ENCODE measurements at regions of chr10 and their contacts with region 1.

Region 1: GRCh38 chr10:32378363-32379317 is 31.7 kb upstream of the EPC1 start:
- DNase-seq: peak; percentile 96
- H3K4me3 Mint-ChIP-seq: no peak overlapping the region
- H3K27ac Mint-ChIP-seq: no peak overlapping the region
- H3K4me1 Mint-ChIP-seq: peaks cover 22% of the 10 kb centered on the region
- H3K27me3 Mint-ChIP-seq: no peaks in the 10 kb centered on the region

Region 2: DNA sequence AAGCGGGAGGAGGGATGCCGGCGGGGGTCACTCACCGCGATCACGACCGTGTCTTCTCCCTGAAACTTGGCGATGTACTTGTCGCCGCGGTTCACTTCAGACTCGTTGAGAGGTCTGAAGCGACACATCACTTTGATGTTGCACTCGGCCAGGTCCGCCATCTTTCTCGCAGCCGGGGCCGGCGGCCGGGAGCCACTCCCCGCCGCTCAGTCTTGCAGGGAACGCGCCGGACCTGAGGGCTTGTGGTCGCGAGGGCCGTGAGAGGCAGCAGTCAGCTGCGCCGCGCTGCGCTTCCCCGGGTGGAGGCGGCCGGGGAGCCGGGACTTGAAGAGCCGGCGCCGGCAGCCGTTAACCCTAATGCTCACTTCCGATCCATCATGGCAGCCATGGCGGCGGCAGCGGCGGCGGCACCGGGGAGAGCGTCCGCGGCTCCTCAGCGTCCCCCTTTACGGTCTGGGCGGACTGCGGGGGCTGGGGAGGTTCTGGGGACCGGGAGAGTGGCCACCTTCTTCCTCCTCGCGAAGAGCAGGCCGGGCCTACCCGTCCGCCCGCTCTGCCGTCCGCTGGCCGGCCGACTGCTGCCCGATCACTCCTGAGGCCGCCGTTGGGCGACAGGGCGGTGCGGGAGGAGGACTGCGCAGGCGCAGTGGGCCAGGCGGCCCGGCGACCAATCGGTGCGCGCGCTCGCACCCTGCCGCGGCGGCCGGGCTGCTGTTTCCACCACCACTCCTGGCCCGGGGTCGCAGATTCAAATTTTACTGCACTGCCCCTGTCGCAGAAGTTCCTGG is 322.6 kb before region 1 on chr10 and contains the start of gene KIF5B:
- CTCF ChIA-PET with region 1: no interaction called
- POLR2A ChIA-PET with region 1: no interaction called
- intact Hi-C with region 1: loop called (anchors 2 kb)
- DNase-seq: peak; percentile 90
- H3K4me3 Mint-ChIP-seq: peak within 1 kb of the TSS; percentile 96
- H3K27ac Mint-ChIP-seq: peak within 1 kb of the TSS; percentile 94
- H3K4me1 Mint-ChIP-seq: peaks cover 37% of the 10 kb centered on the region
- H3K27me3 Mint-ChIP-seq: no peaks in the 10 kb centered on the region
- total RNA-seq, gene KIF5B: 73.9 to 75.2 TPM

Region 3: DNA sequence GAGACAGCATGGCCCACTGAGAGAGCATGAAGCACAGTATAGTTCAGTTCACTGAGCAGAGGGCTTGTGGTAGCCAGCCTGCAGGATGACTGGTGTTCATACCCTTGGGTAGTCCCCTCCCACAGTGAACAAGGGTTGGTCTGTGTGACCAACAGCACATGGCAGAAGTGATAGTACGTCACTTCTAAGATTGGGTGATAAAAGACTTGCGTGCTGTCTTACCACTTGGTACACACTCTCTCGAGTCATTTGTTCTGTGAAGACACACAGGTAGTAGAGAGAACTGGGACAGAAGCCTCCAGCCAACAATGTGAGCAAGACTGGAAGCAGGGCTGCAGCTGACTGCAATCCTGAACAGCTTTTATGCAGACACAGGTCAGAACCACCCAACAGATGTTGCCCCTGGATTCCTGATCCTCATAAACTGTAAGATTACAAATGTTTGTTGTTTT is 46.3 kb before region 1 on chr10:
- CTCF ChIA-PET with region 1: no interaction called
- POLR2A ChIA-PET with region 1: interaction called, 5 read pairs
- intact Hi-C with region 1: loop called (anchors 1 kb)
- DNase-seq: peak; percentile 90
- H3K4me3 Mint-ChIP-seq: peak overlapping the region; percentile 75
- H3K27ac Mint-ChIP-seq: peak overlapping the region; percentile 91
- H3K4me1 Mint-ChIP-seq: peaks cover 93% of the 10 kb centered on the region
- H3K27me3 Mint-ChIP-seq: no peaks in the 10 kb centered on the region

Region 4: GRCh38 chr10:32367793-32368453 is 10.7 kb before region 1 on chr10:
- CTCF ChIA-PET with region 1: interaction called, 18 read pairs
- POLR2A ChIA-PET with region 1: interaction called, 3 read pairs
- intact Hi-C with region 1: loop called (anchors 1 kb)
- DNase-seq: peak; percentile 83
- H3K4me3 Mint-ChIP-seq: peak overlapping the region; percentile 39
- H3K27ac Mint-ChIP-seq: peak overlapping the region; percentile 42
- H3K4me1 Mint-ChIP-seq: peaks cover 64% of the 10 kb centered on the region
- H3K27me3 Mint-ChIP-seq: no peaks in the 10 kb centered on the region

Region 5: DNA sequence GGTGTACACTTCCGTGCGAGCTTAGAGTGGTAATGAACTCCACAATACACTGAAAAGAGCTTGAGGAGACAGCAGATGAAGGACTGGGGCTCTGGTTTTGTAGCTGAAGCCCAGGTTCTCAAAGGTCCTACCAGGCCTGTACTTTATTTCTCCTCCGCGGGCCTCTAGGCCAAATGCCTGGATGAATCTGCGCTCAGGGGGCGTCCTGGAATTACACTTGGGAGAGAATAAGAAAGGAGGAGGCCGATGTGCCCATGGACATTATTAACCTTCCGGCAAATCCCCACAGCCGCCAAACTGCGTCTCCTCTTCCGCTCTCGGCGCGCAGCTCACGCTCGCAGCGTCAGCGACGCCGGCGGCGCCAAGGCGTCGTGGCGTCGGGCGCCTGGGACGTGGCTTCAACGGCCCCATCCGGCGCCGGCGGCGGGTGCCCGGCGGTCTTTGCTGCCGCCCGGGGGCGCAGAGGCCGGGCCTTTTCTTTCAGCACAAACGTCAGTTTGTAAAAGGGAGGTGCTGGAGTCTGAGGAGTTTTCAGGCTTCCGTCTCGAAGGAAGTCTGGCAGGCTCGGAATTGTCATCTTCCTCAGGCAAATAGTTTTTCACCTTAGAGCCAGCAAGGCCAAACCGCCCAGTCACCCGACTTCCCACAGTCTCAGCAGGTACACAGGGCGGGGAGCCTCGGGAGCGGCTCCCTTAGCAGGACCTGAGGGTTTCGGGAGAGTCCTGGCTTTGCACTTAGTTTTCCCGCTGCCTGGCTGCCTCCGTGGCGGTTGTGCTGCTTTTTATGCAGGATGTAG is 67.3 kb after region 1 on chr10 and contains the start of gene CCDC7:
- CTCF ChIA-PET with region 1: interaction called, 23 read pairs
- POLR2A ChIA-PET with region 1: interaction called, 9 read pairs
- intact Hi-C with region 1: loop called (anchors 1 kb)
- DNase-seq: peak; percentile 89
- H3K4me3 Mint-ChIP-seq: peak within 1 kb of the TSS; percentile 89
- H3K27ac Mint-ChIP-seq: peak within 1 kb of the TSS; percentile 96
- H3K4me1 Mint-ChIP-seq: peaks cover 13% of the 10 kb centered on the region
- H3K27me3 Mint-ChIP-seq: no peaks in the 10 kb centered on the region
- total RNA-seq, gene CCDC7: 8.6 to 11.6 TPM

Region 6: GRCh38 chr10:33134011-33134751 is 755.5 kb after region 1 on chr10:
- CTCF ChIA-PET with region 1: no interaction called
- POLR2A ChIA-PET with region 1: no interaction called
- intact Hi-C with region 1: loop called (anchors 5 kb)
- DNase-seq: peak; percentile 90
- H3K4me3 Mint-ChIP-seq: peak overlapping the region; percentile 50
- H3K27ac Mint-ChIP-seq: peak overlapping the region; percentile 90
- H3K4me1 Mint-ChIP-seq: peaks cover 91% of the 10 kb centered on the region
- H3K27me3 Mint-ChIP-seq: peaks cover 1% of the 10 kb centered on the region

Measured in activated CD4-positive, alpha-beta memory T cell treated with anti-CD3 and anti-CD28 coated beads for 36 hours (primary cell).